ENCODE measurements at regions of chr17 and their contacts with region 1.

Region 1: DNA sequence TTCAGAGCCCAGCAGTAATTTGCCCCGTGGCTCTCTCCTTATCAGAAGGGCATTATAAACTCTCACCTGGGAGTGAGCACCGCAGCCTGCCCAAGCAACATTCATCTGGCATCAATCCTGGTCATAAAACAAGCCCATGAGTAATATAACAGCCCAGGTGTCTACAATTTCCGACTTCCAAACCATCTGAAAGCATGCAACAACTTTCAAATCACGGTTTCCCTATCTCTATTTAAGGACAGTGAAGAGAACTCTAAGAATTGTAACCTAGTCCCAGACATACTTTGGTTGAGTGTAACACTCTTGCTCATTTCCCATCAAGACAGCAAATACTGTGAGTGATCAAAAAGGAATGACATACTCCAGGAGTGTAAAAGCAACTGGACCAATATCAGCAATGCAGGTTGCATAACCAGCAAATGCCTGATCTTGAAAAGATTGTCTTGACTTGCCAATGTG is 487.4 kb upstream of the SOX9 start:
- DNase-seq: peak; percentile 21
- H3K4me3 Mint-ChIP-seq: peak overlapping the region; percentile 2
- H3K27ac Mint-ChIP-seq: no peak overlapping the region
- H3K4me1 Mint-ChIP-seq: peaks cover 29% of the 10 kb centered on the region
- H3K27me3 Mint-ChIP-seq: no peaks in the 10 kb centered on the region
- CTCF ChIP-seq: no peak

Region 2: DNA sequence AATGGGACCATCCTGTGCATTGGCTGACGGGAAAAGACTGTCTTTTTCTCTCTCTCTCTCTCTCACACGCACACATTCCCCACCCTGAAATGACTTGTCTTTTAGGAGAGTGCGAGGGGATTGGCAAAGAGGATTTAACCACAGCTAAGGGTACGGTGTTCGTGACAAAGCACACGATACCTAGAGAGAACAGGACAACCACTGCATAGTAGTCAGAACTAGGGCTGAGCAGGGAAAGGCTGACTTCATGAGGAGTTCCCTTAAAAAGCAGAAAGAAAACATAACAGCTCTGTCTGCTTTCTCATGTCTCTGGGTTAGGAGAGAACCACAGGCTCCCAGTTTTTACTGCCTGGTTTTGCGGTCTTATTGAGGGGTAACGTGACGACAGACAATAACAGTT is 255.4 kb before region 1 on chr17:
- CTCF ChIA-PET with region 1: no interaction called
- intact Hi-C with region 1: no loop called
- DNase-seq: no peak
- H3K4me3 Mint-ChIP-seq: no peak overlapping the region
- H3K27ac Mint-ChIP-seq: no peak overlapping the region
- H3K4me1 Mint-ChIP-seq: no peaks in the 10 kb centered on the region
- H3K27me3 Mint-ChIP-seq: no peaks in the 10 kb centered on the region
- CTCF ChIP-seq: no peak

Region 3: GRCh38 chr17:71472809-71473789 is 160.3 kb before region 1 on chr17:
- CTCF ChIA-PET with region 1: no interaction called
- intact Hi-C with region 1: loop called (anchors 5 kb)
- DNase-seq: peak; percentile 57
- H3K4me3 Mint-ChIP-seq: no peak overlapping the region
- H3K27ac Mint-ChIP-seq: no peak overlapping the region
- H3K4me1 Mint-ChIP-seq: peaks cover 27% of the 10 kb centered on the region
- H3K27me3 Mint-ChIP-seq: no peaks in the 10 kb centered on the region
- CTCF ChIP-seq: peak; percentile 68

Region 4: DNA sequence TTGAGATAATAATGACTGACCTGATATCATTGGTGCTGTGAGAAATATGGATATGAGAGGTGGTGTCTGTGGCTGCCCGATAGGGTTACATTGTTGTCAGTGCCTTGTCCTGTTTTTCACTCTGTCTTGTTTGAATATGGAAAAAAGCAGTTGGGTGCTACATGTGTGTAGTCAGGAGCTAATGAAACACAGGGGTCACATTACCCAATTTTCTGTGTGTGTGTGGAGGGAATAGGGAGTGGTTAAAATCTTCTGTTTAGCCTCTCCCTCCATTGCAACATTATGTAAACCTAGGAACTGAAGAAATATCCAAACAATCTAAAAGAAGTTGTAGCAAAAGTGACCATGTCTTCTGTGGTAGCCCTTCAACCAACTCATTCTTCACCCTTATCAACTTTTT is 40.3 kb before region 1 on chr17:
- CTCF ChIA-PET with region 1: no interaction called
- intact Hi-C with region 1: no loop called
- DNase-seq: no peak
- H3K4me3 Mint-ChIP-seq: no peak overlapping the region
- H3K27ac Mint-ChIP-seq: no peak overlapping the region
- H3K4me1 Mint-ChIP-seq: no peaks in the 10 kb centered on the region
- H3K27me3 Mint-ChIP-seq: no peaks in the 10 kb centered on the region
- CTCF ChIP-seq: no peak

Region 5: DNA sequence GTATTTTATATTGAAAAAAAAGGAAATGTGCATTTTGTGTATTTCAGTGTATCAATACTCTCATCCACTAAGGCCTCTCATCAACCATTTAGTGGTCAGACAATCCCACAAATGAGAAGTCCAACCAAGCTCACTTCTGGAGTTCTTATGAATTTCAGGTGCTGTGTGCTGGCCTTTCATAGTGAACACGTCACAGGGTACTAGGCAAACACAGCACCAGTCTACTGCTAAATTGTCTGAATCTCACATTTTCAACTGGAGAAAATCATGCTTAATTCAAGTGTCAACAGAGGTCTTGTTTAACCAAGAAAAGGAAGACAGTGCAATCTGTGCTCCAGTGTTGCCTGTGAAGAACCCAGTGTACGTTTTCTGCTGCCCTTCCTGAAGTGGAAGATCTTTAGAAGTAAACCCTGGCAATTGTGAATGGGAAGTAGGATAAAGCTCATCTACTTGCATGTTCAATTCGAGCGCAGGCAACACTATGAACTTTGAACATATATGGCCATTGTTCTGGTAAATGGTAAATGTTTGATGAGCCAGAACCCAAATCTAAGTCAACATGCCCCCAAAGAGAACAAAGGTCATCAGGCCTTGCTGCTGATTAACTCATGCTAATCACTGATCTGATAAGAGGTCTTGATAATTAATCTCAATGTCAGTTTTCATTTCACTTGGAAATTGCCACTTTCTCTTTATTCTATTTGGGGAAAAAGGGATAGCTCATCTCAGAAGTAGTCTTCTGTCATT is 48.2 kb after region 1 on chr17:
- CTCF ChIA-PET with region 1: no interaction called
- intact Hi-C with region 1: loop called (anchors 5 kb)
- DNase-seq: no peak
- H3K4me3 Mint-ChIP-seq: no peak overlapping the region
- H3K27ac Mint-ChIP-seq: no peak overlapping the region
- H3K4me1 Mint-ChIP-seq: peaks cover 9% of the 10 kb centered on the region
- H3K27me3 Mint-ChIP-seq: no peaks in the 10 kb centered on the region
- CTCF ChIP-seq: no peak

Region 6: DNA sequence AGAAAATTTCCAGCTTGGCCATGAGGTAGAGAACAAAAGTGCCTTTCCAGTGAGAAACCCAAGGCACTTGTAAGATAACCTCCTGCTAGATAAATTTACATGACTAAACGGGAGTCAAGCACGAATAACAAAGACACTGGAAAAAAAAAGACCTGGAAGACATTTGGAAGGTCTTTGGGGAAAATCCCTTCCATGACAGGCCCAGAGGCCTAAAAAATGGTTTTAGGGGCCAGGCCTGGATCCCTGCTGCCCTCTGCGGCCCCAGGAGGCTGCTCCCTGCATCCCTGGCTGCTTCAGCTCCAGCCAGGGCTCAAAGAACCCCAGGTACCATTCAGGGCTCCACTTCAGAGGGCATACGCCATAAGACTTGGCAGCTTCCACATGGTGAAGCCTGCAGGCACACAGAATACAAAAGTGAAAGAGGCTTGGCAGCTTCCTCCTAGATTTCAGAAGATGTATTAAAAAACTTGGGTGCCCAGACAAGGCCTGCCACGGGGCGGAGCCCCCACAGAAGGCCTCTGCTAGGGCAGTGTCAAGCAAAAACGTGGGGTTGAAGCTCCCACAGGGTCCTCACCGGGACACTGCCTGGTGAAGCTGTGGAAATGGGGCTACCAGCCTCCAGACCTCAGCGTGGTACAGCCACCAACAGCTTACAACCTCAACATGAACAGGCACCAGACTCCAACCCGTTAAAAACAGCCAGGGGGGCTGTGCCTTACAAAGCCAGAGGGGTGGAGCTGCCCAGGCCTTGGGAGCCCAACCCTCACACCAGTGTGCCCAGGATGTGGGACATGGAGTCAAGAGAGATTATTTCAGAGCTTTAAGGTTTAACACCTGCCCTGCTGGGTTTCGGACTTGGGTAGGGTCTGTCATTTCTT is 1933.7 kb after region 1 on chr17:
- CTCF ChIA-PET with region 1: no interaction called
- intact Hi-C with region 1: no loop called
- DNase-seq: no peak
- H3K4me3 Mint-ChIP-seq: no peak overlapping the region
- H3K27ac Mint-ChIP-seq: no peak overlapping the region
- H3K4me1 Mint-ChIP-seq: no peaks in the 10 kb centered on the region
- H3K27me3 Mint-ChIP-seq: peaks cover 46% of the 10 kb centered on the region
- CTCF ChIP-seq: no peak